HepG2 (cell line): ENCODE measurements at regions of chr5 and their contacts with region 1.

Region 1: DNA sequence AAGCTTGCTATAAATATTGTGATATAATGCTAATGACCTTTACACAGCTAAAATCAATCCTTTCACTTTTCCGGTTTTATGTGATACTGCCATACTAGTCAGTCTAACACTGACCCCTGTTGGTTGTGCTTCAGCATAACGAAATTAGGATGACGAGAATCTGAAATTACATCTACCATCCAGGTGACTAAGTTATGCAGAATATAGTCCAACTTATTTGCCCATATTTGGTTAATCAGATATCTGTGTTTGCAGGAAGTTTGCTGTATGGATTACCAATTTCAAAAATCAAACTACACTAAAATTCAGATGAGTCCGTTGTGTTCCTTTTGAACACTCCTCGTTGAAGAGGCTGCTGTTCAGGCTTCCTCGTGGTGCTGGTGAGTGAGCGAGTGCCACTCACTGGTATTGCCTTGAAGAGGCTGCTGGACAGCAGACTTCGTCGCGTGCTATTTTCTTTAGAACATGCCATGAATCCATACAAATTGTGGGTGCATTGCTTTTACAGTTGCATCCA is 32.5 kb downstream of the TENT4A start:
- DNase-seq: peak; percentile 45
- ATAC-seq: peak; percentile 71
- H3K4me3 ChIP-seq: no peak overlapping the region
- H3K27ac ChIP-seq: no peak overlapping the region
- H3K4me1 ChIP-seq: no peaks in the 10 kb centered on the region
- H3K27me3 ChIP-seq: no peaks in the 10 kb centered on the region
- CTCF ChIP-seq: peak; percentile 68
- EP300 ChIP-seq: no peak
- POLR2A ChIP-seq: no peak
- RAD21 ChIP-seq: peak; percentile 58

Region 2: GRCh38 chr5:6291961-6292360 is 453.8 kb before region 1 on chr5:
- CTCF ChIA-PET with region 1: interaction called, 3 read pairs
- POLR2A ChIA-PET with region 1: no interaction called
- in situ Hi-C with region 1: no loop called
- intact Hi-C with region 1: loop called (anchors 10 kb)
- DNase-seq: peak; percentile 38
- ATAC-seq: peak; percentile 75
- H3K4me3 ChIP-seq: no peak overlapping the region
- H3K27ac ChIP-seq: no peak overlapping the region
- H3K4me1 ChIP-seq: no peaks in the 10 kb centered on the region
- H3K27me3 ChIP-seq: no peaks in the 10 kb centered on the region
- CTCF ChIP-seq: peak; percentile 53
- EP300 ChIP-seq: no peak
- POLR2A ChIP-seq: no peak
- RAD21 ChIP-seq: 0 out of 2 replicates have a peak, but pooled peaks have one; percentile 12

Region 3: GRCh38 chr5:6377905-6378765 is 367.6 kb before region 1 on chr5 and contains the start of gene MED10:
- CTCF ChIA-PET with region 1: no interaction called
- POLR2A ChIA-PET with region 1: no interaction called
- in situ Hi-C with region 1: loop called (anchors 25 kb)
- intact Hi-C with region 1: no loop called
- DNase-seq: peak; percentile 87
- ATAC-seq: peak; percentile 98
- H3K4me3 ChIP-seq: peak within 1 kb of the TSS; percentile 85 to 99 (median 93)
- H3K27ac ChIP-seq: peak within 1 kb of the TSS; percentile 68
- H3K4me1 ChIP-seq: peaks cover 27% of the 10 kb centered on the region
- H3K27me3 ChIP-seq: no peaks in the 10 kb centered on the region; a peak in 1 of 5 replicates
- CTCF ChIP-seq: no peak
- EP300 ChIP-seq: no peak
- POLR2A ChIP-seq: peak; percentile 82 to 83
- RAD21 ChIP-seq: peak; percentile 32; the same call in 1 of the 2 replicates
- total RNA-seq, gene MED10: 11.2 and 13.2 TPM in 2 replicates

Region 4: DNA sequence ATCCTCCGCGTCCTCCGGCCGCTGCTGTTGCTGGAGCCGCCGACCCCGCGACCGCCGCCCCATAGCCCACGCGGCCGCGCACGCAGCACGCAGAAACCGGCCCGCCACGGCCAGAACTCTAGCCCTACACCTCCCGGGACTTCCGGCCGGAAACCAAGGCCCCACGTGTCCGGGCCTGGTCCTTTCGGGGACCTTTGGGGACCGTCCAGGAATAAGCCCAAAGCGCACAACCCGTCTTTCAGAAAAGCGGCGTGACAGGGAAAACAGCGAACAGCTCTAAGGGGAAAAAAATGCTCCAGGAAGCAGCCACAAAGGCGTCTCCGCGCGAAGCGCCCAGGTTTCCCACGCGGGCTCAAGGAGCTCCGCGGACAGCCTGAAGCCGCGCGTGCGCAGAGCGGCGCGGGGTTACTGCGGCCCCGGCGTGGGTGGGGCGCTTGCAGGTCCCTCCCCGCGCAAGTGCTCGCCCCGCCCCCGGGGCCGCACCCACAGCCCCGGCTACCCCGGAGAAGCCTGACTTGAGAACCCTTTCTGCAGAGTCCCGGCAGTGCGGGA is 112.8 kb before region 1 on chr5 and contains the starts of genes NSUN2 and SRD5A1:
- CTCF ChIA-PET with region 1: no interaction called
- POLR2A ChIA-PET with region 1: no interaction called
- in situ Hi-C with region 1: no loop called
- intact Hi-C with region 1: loop called (anchors 1 kb)
- DNase-seq: peak; percentile 81
- ATAC-seq: peak; percentile 88
- H3K4me3 ChIP-seq: peak within 1 kb of the TSS; percentile 90 to 98 (median 94)
- H3K27ac ChIP-seq: peak within 1 kb of the TSS; percentile 97
- H3K4me1 ChIP-seq: peaks cover 63% of the 10 kb centered on the region
- H3K27me3 ChIP-seq: no peaks in the 10 kb centered on the region; a peak in 1 of 5 replicates
- CTCF ChIP-seq: no peak; the same call in 1 of the 2 replicates
- EP300 ChIP-seq: no peak
- POLR2A ChIP-seq: peak; percentile 64 to 73; a peak in 3 of 4 replicates
- RAD21 ChIP-seq: peak; percentile 50
- total RNA-seq, gene NSUN2: 69.1 and 71.4 TPM in 2 replicates
- total RNA-seq, gene SRD5A1: 6.1 and 7.1 TPM in 2 replicates

Region 5: DNA sequence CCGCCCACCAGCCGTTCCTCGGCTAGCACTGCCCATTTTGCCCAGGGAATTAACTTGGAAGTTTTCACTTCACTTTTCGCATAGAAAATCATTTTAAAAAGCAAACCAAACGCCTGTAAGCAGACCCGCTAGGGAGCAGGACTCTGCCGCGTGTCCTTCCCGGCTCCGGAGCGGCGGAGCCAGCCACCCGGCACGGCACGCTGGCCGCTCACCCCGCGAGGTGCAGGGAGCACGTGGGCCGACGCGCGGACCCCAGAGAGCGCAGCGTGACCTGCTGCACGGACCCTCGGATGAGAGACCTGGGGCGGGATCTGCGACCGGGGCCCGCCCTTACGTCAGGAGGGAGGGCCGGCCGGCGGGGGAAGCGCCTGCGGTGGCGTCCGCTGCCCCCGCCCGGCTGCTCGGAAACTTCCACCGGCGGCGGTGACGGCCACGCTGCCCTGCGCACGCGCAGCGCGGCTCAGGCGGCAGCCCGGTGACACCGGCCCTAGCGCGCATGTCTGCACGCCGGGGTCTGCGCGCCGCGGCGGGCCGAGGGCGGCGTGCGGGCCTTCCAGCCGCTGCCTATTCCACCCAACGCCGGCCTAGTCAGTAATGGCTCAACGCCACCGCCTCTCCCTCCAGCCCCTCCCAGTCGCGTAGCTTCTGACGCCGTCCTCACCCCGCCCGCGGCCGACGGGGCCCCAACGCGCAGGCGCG is 33.0 kb before region 1 on chr5:
- CTCF ChIA-PET with region 1: no interaction called
- POLR2A ChIA-PET with region 1: no interaction called
- in situ Hi-C with region 1: no loop called
- intact Hi-C with region 1: loop called (anchors 1 kb)
- DNase-seq: peak; percentile 92
- ATAC-seq: peak; percentile 86
- H3K4me3 ChIP-seq: peak overlapping the region; percentile 64 to 79 (median 65)
- H3K27ac ChIP-seq: peak overlapping the region; percentile 95
- H3K4me1 ChIP-seq: peaks cover 54% of the 10 kb centered on the region
- H3K27me3 ChIP-seq: no peaks in the 10 kb centered on the region; a peak in 1 of 5 replicates
- CTCF ChIP-seq: peak; percentile 21; the same call in 1 of the 2 replicates
- EP300 ChIP-seq: peak; percentile 3 to 41; a peak in 1 of 4 replicates
- POLR2A ChIP-seq: peak in 1 of 2 experiments; percentile 71; a peak in 2 of 4 replicates
- RAD21 ChIP-seq: peak; percentile 69